OCI-LY7 (cell line): ENCODE measurements at regions of chr2 and their contacts with region 1.

Region 1: GRCh38 chr2:12050396-12050795 is 304.0 kb downstream of the LPIN1 start:
- DNase-seq: peak; percentile 84
- H3K4me3 ChIP-seq: peak overlapping the region; percentile 1
- H3K27ac ChIP-seq: peak overlapping the region; percentile 90
- H3K4me1 ChIP-seq: peaks cover 66% of the 10 kb centered on the region
- CTCF ChIP-seq: peak; percentile 77

Region 2: DNA sequence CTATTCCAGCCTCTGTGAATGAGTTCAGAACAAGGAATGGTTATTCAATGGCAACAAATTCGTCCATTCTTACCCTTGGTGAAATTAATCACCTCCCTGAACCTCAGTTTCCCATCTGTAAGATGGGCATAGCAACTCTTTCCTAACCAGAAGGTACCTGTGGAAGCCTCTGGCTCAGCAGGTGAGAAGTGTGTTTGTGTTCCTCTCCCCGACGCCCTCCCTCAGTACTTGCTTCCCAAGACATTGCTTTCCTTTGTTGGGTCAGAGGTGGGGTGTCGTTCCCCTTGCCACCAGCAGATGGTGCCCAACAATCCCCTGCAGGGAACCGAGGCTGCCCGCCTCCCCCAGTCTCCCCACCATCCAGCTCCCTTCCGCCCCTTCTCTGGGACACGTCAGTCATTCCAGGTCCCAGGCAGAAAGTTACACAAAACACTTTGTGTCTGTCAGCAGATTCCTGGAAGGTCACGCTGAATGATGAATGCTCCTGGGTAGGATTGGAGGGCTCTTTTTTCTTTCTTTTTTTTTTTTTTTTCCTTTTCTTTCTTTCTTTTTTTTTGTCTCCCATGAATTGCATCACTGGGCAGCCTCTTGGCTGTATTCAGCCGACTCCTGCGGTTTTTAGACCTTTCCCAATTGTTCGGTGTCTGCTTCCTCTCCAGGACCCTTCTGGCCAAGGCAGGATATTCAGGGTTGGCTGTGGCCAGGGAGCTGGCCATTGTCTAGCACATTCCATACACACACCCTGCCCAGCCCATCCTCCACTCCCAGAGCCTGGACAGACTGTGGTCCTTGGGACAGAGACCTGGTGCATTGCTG is 186.7 kb before region 1 on chr2:
- CTCF ChIA-PET with region 1: interaction called, 3 read pairs
- POLR2A ChIA-PET with region 1: interaction called, 5 read pairs
- intact Hi-C with region 1: loop called (anchors 1 kb)
- DNase-seq: peak; percentile 74
- H3K4me3 ChIP-seq: no peak overlapping the region
- H3K27ac ChIP-seq: no peak overlapping the region
- H3K4me1 ChIP-seq: peaks cover 20% of the 10 kb centered on the region
- CTCF ChIP-seq: peak; percentile 93

Region 3: GRCh38 chr2:12320991-12321641 is 270.7 kb after region 1 on chr2:
- CTCF ChIA-PET with region 1: no interaction called
- POLR2A ChIA-PET with region 1: no interaction called
- intact Hi-C with region 1: loop called (anchors 5 kb)
- DNase-seq: no peak
- H3K4me3 ChIP-seq: no peak overlapping the region
- H3K27ac ChIP-seq: no peak overlapping the region
- H3K4me1 ChIP-seq: no peaks in the 10 kb centered on the region
- CTCF ChIP-seq: no peak

Region 4: GRCh38 chr2:12416600-12416999 is 366.2 kb after region 1 on chr2:
- CTCF ChIA-PET with region 1: no interaction called
- POLR2A ChIA-PET with region 1: interaction called, 3 read pairs
- intact Hi-C with region 1: loop called (anchors 5 kb)
- DNase-seq: peak; percentile 7
- H3K4me3 ChIP-seq: no peak overlapping the region
- H3K27ac ChIP-seq: no peak overlapping the region
- H3K4me1 ChIP-seq: no peaks in the 10 kb centered on the region
- CTCF ChIP-seq: peak; percentile 60; the same call in 1 of the 2 replicates

Region 5: DNA sequence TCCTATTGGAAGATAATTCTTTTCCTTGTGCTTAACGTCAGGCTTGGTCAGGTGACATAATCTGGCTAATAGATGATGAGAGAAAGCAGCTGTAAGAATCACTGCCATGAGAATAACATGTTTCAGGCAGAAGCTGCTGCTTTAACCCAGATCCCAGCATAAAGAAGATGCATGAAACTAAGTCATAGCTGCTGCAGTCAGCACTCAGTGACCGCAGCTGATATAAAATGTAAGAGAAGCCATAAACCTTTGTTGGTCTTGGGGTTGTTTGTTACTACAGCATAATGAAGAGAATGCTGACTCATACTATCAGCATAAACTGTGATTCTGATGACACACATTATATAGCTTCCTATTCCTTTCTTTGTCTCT is 392.1 kb after region 1 on chr2:
- CTCF ChIA-PET with region 1: no interaction called
- POLR2A ChIA-PET with region 1: no interaction called
- intact Hi-C with region 1: no loop called
- DNase-seq: no peak
- H3K4me3 ChIP-seq: no peak overlapping the region
- H3K27ac ChIP-seq: no peak overlapping the region
- H3K4me1 ChIP-seq: no peaks in the 10 kb centered on the region
- CTCF ChIP-seq: no peak

Region 6: DNA sequence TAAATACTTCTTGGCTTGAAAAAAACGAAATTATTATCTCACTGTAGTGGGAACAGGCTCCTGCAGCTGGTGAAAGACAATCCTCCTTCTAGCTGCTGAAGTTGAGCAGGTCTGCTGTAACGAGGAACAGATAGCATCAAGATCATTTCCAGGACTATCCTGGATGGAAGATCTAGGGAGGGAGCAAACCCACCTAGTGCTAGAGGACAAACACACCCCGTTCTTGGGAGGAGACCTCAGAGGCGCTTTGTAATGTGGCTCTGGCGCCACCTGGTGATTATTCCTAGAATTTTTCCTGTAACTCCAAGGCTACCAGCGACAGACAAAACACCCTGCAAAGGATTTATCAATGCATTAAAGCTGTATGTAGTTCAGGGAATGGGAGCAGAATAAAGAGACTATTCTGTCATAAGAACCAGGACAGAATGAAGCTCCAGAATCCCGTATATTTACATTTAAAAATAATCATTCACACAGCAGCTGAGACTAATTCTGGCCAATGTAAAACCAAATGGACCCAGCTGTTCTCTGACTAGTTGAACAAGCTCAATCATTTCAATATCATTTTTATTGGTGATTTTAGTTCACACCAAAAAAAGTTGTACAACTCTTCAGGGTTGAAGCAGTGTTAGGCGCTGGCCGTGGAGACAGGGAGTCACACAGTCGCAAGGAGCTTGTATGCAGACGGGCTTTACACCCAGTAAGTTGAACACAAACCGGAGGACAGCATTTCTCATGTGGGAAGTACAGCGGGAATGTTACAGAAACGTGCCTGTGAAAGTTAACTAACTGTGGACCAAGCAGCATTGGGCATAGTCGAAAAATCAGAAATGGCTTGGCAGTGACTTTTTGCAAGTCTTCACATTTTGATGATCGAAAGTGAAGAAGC is 956.7 kb after region 1 on chr2:
- CTCF ChIA-PET with region 1: no interaction called
- POLR2A ChIA-PET with region 1: no interaction called
- intact Hi-C with region 1: loop called (anchors 5 kb)
- DNase-seq: peak; percentile 61
- H3K4me3 ChIP-seq: no peak overlapping the region
- H3K27ac ChIP-seq: no peak overlapping the region
- H3K4me1 ChIP-seq: no peaks in the 10 kb centered on the region
- CTCF ChIP-seq: peak; percentile 90